ENCODE measurements at regions of chr1 and their contacts with region 1.

Region 1: GRCh38 chr1:221335161-221336101 is 406.5 kb downstream of the DUSP10 start:
- DNase-seq: peak in 3 of 10 donors; percentile 12 to 43 (median 40)
- H3K4me3 ChIP-seq: peak overlapping the region in 35 of 59 donors; percentile 1 to 54 (median 30)
- H3K27ac ChIP-seq: peak overlapping the region; percentile 33 to 97 (median 90)
- H3K27me3 ChIP-seq: peaks cover 0 to 7% (median 0%) of the 10 kb centered on the region in 45 donors
- CTCF ChIP-seq: peak in 2 of 56 donors; percentile 7 to 9

Region 2: GRCh38 chr1:221263831-221264767 is 71.3 kb before region 1 on chr1:
- intact Hi-C with region 1: loop called in 1 of 2 experiments (anchors 5 kb)
- DNase-seq: peak in 8 of 10 donors; percentile 6 to 79 (median 54)
- H3K4me3 ChIP-seq: no peak overlapping the region
- H3K27ac ChIP-seq: peak overlapping the region in 1 of 59 donors; percentile 28
- H3K27me3 ChIP-seq: no peaks in the 10 kb centered on the region
- CTCF ChIP-seq: peak; percentile 31 to 86 (median 73)

Region 3: GRCh38 chr1:221284028-221284427 is 51.4 kb before region 1 on chr1:
- intact Hi-C with region 1: loop called in 1 of 2 experiments (anchors 2 kb)
- DNase-seq: no peak
- H3K4me3 ChIP-seq: peak overlapping the region in 4 of 59 donors; percentile 12 to 34 (median 24)
- H3K27ac ChIP-seq: peak overlapping the region in 7 of 59 donors; percentile 11 to 62 (median 13)
- H3K27me3 ChIP-seq: no peaks in the 10 kb centered on the region
- CTCF ChIP-seq: no peak